Psoas muscle (tissue), 8 donors: ENCODE measurements at regions of chr21 and their contacts with region 1.

Region 1: DNA sequence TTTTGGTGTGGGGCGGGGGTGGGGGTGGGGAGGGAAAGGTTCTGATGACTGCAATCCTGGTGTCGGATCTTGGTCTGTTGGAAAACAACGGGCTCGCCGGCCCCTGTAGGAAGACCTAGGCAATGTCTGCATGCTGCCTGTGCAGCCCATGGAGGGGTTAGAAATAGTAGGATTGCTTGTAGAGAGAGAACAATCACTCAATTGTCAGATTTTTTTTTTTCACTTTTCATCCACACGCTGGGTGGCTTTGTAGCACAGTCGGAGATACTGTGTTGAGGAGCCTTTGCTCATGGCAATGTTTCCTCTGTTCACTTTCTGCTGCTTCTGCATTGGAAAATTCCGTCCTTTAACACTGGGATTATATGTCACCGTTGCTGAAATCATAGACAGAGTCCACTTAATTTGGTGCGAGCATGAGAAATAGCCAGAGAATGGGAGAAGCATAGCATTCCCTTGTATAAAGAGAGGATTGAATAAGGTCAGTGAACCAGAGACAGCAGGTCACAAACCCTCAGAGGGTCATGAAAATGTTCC is 107.5 kb downstream of the MRPS6 start:
- DNase-seq: no peak
- ATAC-seq: peak; percentile 39 to 70 (median 58)
- H3K4me3 ChIP-seq: peak overlapping the region; percentile 61
- H3K27ac ChIP-seq: peak overlapping the region; percentile 72
- H3K4me1 ChIP-seq: peaks cover 23% of the 10 kb centered on the region
- H3K27me3 ChIP-seq: no peaks in the 10 kb centered on the region
- CTCF ChIP-seq: no peak

Region 2: DNA sequence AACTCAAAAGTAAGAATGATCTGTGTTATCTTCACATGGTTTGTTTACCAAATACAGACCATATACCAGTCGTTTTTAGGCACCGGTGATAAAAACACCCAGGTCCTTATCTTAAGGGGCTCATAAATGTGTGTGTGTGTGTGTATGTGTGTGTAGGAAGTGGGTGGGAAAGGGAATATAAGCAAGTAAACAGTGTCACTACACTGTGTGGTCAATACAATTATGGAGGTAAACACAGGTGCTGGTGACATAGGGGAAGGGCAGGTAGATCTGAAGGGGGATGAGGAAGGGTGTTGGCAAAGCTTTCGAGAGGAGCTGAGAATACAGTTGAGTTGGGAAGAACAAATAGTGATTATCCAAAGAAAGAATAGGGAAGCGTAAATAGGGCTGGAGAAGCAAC is 126.6 kb before region 1 on chr21:
- intact Hi-C with region 1: no loop called
- DNase-seq: no peak
- ATAC-seq: no peak
- H3K4me3 ChIP-seq: no peak overlapping the region
- H3K27ac ChIP-seq: no peak overlapping the region
- H3K4me1 ChIP-seq: no peaks in the 10 kb centered on the region
- H3K27me3 ChIP-seq: no peaks in the 10 kb centered on the region
- CTCF ChIP-seq: no peak

Region 3: GRCh38 chr21:34129039-34129891 is 51.6 kb before region 1 on chr21:
- intact Hi-C with region 1: loop called in 1 of 2 experiments (anchors 5 kb)
- DNase-seq: peak; percentile 55 to 67
- ATAC-seq: peak; percentile 75 to 83 (median 79)
- H3K4me3 ChIP-seq: peak overlapping the region; percentile 50
- H3K27ac ChIP-seq: peak overlapping the region; percentile 85
- H3K4me1 ChIP-seq: peaks cover 69% of the 10 kb centered on the region
- H3K27me3 ChIP-seq: no peaks in the 10 kb centered on the region
- CTCF ChIP-seq: peak; percentile 39

Region 4: GRCh38 chr21:34143685-34144182 is 37.2 kb before region 1 on chr21:
- intact Hi-C with region 1: loop called in 1 of 2 experiments (anchors 5 kb)
- DNase-seq: no peak
- ATAC-seq: no peak
- H3K4me3 ChIP-seq: no peak overlapping the region
- H3K27ac ChIP-seq: no peak overlapping the region
- H3K4me1 ChIP-seq: peaks cover 5% of the 10 kb centered on the region
- H3K27me3 ChIP-seq: no peaks in the 10 kb centered on the region
- CTCF ChIP-seq: no peak

Region 5: DNA sequence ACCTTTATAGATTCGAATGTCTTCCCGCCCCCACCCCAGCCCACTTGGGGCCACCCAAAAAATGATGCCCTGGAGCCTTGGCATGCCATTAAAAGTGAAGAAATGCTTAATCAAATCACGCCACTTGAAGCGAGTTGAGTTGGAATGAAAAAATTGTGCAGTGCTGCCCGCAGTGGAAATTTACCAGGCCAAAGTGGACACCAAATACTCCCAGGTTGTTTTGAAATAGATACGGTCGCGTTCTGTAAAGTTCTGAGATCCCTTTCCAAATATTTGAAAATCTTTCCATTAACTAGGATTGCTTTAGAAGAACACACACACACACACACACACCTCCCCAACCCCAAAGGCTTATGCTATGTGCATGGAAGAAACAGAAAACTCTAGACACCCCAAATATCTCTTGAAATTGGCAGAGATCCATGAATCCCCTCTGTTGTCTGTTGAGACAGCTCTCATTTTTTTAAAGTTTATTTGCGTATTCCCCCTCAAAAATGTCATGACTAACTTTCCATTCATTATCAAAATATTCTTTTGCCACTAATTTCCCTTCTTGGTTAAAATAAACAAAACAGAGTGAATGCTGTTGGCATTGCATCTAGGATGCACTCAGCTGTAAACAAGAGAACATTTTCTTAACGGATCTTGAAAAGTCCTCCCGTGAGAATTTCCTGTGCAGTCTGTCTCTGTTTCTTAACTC is 40.6 kb after region 1 on chr21:
- intact Hi-C with region 1: no loop called
- DNase-seq: no peak
- ATAC-seq: peak in 2 of 4 donors; percentile 40 to 69
- H3K4me3 ChIP-seq: no peak overlapping the region
- H3K27ac ChIP-seq: no peak overlapping the region
- H3K4me1 ChIP-seq: peaks cover 16% of the 10 kb centered on the region
- H3K27me3 ChIP-seq: no peaks in the 10 kb centered on the region
- CTCF ChIP-seq: no peak